ENCODE measurements at regions of chr2 and their contacts with region 1.

Region 1: DNA sequence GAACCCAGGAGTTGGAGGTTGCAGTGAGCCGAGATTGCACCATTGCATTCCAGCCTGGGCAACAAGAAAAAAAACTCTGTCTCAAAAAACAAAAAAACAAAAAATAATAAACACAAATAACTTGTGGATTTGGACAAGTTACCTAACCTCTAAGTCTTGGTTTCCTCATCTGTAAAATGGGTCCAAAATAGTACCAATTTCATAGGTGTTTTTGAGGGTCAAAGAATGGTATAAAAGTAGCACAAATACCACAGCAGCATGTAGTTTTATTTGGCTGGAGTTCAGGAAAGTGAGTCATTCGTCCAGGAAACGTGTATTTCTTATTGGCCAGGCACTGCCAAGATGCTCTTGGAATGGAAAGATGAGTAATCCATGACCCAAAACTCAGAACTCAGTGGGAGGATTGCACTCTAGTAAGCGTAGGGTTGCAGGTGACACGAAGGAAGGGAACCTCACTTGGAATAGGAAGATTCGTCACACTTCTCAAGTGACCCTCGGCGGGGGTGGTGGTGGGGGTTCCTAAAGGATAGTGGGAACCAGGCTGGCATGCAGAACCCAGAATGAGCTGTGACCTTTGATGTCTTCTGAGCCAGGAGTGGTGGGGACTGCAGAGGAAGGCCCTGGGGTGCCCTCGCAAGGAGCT is 24.4 kb downstream of the GRHL1 start:
- DNase-seq: peak; percentile 78
- H3K4me3 ChIP-seq: no peak overlapping the region
- CTCF ChIP-seq: no peak

Region 2: DNA sequence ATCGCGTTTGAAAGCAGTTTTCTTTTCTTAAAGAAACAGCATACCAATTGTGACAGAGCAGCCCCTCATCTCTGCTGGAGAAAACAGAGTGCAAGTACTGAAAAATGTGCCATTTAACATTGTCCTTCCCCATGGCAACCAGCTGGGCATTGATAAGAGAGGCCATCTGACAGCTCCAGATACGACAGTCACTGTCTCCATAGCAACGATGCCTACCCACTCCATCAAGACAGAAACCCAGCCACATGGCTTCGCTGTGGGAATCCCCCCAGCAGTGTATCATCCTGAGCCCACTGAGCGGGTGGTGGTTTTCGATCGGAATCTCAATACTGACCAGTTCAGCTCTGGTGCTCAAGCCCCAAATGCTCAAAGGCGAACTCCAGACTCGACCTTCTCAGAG is 14.9 kb before region 1 on chr2:
- CTCF ChIA-PET with region 1: interaction called, 10 read pairs
- POLR2A ChIA-PET with region 1: no interaction called
- DNase-seq: no peak
- H3K4me3 ChIP-seq: no peak overlapping the region
- CTCF ChIP-seq: no peak

Region 3: DNA sequence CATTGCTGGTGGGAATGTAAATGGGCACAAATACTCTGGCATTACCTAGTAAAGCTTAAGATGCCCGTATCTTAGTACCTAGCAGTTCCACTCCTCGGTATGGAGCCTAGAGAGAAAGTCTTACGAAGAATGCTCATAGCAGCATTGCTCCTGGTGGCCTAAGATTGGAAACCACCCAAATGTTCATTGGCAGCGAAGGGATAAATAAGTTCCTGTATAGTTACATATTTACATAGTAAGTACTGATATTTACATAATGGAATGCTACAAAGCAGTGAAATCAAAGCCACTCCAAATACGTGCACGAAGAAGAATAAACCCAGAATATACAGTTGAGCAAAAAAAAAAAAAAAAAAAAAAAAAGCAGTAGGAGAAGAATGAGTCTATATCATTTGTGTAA is 883.4 kb after region 1 on chr2:
- CTCF ChIA-PET with region 1: no interaction called
- POLR2A ChIA-PET with region 1: no interaction called
- DNase-seq: no peak
- H3K4me3 ChIP-seq: no peak overlapping the region
- CTCF ChIP-seq: no peak